ENCODE measurements at regions of chr1 and their contacts with region 1.

Region 1: GRCh38 chr1:16078925-16079656 is 5.6 kb upstream of the FAM131C start:
- DNase-seq: peak; percentile 86
- ATAC-seq: peak; percentile 88
- H3K4me3 Mint-ChIP-seq: peak overlapping the region; percentile 43
- H3K27ac Mint-ChIP-seq: peak overlapping the region; percentile 89
- H3K4me1 Mint-ChIP-seq: peaks cover 13% of the 10 kb centered on the region
- H3K27me3 Mint-ChIP-seq: peaks cover 8% of the 10 kb centered on the region

Region 2: GRCh38 chr1:16122916-16123315 is 43.8 kb after region 1 on chr1:
- CTCF ChIA-PET with region 1: interaction called, 10 read pairs
- DNase-seq: peak; percentile 50
- ATAC-seq: peak; percentile 51
- H3K4me3 Mint-ChIP-seq: no peak overlapping the region
- H3K27ac Mint-ChIP-seq: no peak overlapping the region
- H3K4me1 Mint-ChIP-seq: peaks cover 12% of the 10 kb centered on the region
- H3K27me3 Mint-ChIP-seq: peaks cover 5% of the 10 kb centered on the region

Region 3: DNA sequence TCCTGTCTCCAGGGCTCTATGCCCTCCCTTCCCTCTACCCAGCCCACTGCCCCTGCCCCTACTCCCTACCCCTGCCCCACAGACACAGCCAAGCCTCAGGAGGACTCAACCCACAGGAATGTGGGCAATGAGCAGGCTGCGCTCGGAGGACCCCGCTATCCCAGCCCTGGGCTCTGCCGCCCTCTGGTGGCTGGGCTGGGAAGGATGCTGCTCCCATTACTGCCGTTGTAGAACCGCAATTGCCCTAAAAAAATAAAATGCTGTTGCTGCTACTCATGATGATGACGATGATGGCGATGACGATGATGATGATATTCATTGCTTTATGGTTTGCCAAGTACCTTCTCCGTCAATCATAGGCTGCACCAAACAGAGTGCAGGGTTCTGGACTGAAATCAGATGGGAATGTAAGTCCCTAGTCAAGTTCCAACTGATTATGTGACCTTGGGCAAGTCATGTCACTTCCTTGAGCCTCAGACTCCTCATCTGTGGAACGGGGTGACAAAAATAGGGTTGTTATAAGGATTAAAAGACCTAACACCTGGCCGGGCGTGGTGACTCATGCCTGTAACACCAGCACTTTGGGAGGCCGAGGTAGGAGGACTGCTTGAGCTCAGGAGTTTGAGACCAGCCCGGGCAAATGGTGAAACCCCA is 108.8 kb after region 1 on chr1:
- CTCF ChIA-PET with region 1: interaction called, 259 read pairs
- DNase-seq: peak; percentile 78
- ATAC-seq: peak; percentile 84
- H3K4me3 Mint-ChIP-seq: no peak overlapping the region
- H3K27ac Mint-ChIP-seq: no peak overlapping the region
- H3K4me1 Mint-ChIP-seq: peaks cover 2% of the 10 kb centered on the region
- H3K27me3 Mint-ChIP-seq: peaks cover 11% of the 10 kb centered on the region

Region 4: DNA sequence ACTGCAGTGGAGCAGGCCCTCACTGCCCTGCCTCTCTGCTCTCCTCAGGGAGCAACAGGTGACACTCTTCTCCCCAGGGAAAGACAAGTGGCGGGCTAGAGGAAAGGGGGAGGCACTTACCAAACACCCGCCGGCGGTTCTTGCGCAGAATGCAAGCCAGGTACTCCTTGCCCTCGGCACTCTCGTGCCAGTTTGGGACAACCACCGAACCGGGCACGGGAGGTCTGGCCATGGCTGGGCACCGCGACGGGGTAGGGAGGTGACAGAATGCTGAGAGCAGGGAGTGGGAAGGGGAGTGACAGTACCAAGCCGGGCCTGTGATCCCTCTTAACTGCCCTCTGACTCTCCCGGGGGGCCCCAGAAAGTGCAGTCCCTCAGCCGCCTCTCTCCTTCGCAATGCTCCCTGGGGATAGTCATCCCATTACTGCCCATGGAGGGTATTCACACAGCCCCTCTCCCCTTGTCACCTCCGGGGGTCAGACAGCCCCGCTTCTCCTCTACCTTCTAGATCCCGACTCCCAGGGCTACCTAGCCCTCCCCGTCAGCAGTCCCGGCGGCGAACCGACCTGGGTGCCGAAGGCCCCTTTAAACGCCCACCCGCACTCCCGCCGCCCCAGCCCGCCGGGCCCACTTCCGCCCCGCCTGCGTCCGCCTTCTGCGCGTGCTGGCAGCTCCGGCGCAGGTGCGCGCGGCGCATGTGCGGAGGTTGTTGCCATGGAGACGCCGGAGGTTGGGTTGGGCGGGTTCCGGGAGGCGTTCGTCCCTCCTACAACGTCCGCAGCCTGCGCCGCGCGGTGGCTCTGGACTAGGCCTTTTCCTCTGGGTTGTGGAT is 157.6 kb after region 1 on chr1 and contains the start of gene CPLANE2:
- CTCF ChIA-PET with region 1: interaction called, 24 read pairs
- DNase-seq: peak; percentile 97
- ATAC-seq: peak; percentile 94
- H3K4me3 Mint-ChIP-seq: peak within 1 kb of the TSS; percentile 79
- H3K27ac Mint-ChIP-seq: peak within 1 kb of the TSS; percentile 86
- H3K4me1 Mint-ChIP-seq: peaks cover 34% of the 10 kb centered on the region
- H3K27me3 Mint-ChIP-seq: no peaks in the 10 kb centered on the region
- total RNA-seq, gene CPLANE2: 5.9 to 6.4 TPM

Region 5: DNA sequence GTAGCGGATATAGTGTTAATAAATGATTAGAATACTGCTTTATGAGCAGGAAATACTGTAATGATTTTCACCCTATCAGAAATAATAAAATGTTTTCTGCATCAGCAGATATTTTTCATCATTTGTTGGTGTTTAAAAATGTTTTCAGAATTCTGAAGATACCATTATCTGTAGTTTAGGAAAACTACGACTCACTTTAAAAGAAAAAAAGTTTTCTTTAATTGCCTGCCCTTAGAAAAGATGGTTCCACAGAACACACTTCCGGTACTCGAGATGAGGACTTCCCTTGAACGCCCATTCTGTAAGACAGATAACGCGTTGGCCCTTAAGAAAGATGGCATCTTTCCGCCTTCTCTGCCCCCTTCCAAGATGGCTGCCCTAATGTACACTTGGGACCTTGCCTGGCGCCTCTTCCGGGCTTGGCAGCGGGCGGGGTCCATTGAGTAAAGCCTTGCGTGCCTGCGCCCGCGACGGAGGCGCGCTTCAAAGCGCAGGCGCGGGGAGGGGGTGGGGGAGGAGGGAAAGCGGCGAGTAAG is 287.7 kb after region 1 on chr1 and contains the start of gene SZRD1:
- CTCF ChIA-PET with region 1: interaction called, 61 read pairs
- DNase-seq: peak; percentile 98
- ATAC-seq: peak; percentile 89
- H3K4me3 Mint-ChIP-seq: peak within 1 kb of the TSS; percentile 99
- H3K27ac Mint-ChIP-seq: peak within 1 kb of the TSS; percentile 99
- H3K4me1 Mint-ChIP-seq: peaks cover 42% of the 10 kb centered on the region
- H3K27me3 Mint-ChIP-seq: no peaks in the 10 kb centered on the region
- total RNA-seq, gene SZRD1: 161 to 189 TPM

Measured in activated CD8-positive, alpha-beta memory T cell treated with anti-CD3 and anti-CD28 coated beads, Interleukin-2, amount 10 ng/mL, durations not matched to agents 7 days and 5 days (primary cell).